Psoas muscle (tissue), 8 donors: ENCODE measurements at regions of chr15 and their contacts with region 1.

Region 1: DNA sequence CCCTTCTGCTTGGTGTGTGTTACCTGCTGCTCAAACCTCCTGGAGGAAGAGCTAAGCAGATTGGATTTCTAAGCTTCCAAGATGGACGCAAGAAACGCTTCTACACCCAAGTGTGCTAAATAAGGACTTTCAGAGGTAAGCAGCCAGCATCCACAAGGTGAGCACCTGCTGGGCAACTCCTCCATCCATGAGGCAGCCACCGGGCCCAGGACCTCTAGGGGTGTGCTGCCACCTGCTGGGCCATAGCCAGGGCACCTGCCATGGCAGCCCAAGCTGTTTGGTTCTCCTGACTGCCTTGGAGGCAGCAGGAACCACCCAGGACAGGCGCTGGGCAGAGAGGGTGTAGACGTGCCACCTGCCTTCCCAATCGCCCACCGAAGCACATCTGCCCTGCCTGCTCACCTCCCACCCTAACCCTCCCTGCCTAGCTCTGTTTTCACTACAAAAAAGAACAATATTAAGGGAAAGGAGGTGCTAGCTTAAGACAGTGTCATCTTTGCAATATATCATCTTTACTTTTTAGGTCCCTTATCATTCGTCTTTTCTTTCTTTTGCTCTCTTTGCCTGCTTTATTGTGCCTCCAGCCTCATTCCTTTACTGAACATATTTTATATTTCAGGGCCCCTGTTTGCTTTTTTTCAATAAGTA is 12.9 kb downstream of the C15orf62 start:
- DNase-seq: peak in 1 of 2 donors; percentile 70
- ATAC-seq: peak; percentile 66 to 79 (median 73)
- H3K4me3 ChIP-seq: no peak overlapping the region
- H3K27ac ChIP-seq: no peak overlapping the region
- H3K4me1 ChIP-seq: peaks cover 10% of the 10 kb centered on the region
- H3K27me3 ChIP-seq: no peaks in the 10 kb centered on the region
- CTCF ChIP-seq: peak; percentile 56

Region 2: DNA sequence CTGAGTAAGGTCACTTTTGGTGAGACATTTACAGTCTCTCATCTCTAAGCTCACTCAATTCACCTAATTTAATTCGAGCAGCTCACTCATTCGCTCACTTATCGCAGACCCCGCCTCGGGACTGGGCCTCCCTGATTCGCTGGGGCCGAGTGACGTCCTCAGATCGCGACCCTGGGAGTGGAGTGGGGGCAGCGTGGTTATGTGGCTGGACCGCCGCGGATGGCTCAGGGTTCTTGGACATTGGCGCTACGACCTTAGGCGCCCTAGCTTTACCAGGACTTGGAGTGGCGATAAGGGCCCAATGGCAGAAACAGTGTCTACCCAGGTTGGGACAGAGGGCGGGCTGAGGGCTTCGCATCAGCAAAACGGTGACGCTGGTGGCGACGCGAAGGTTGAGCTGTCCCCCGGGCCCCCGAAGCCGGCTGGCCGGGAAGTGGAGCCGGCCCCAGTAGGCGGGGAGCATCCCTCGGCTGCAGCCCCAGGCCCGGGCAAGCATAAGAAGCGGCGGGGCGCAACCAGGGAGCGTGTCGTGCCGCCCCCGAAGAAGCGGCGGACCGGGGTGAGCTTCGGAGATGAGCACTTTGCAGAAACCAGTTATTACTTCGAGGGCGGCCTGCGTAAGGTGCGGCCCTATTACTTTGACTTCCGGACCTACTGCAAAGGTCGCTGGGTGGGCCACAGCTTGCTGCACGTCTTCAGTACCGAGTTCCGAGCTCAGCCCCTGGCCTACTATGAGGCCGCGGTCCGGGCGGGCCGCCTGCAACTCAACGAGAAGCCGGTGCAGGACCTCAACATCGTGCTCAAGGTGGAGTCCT is 213.4 kb before region 1 on chr15 and contains the start of gene RPUSD2:
- intact Hi-C with region 1: no loop called
- DNase-seq: peak; percentile 95 to 96
- ATAC-seq: peak; percentile 73 to 85 (median 79)
- H3K4me3 ChIP-seq: peak within 1 kb of the TSS; percentile 98
- H3K27ac ChIP-seq: peak within 1 kb of the TSS; percentile 86
- H3K4me1 ChIP-seq: peaks cover 14% of the 10 kb centered on the region
- H3K27me3 ChIP-seq: no peaks in the 10 kb centered on the region
- CTCF ChIP-seq: no peak
- total RNA-seq, gene RPUSD2: 8.7 to 12.5 (median 11.0) TPM

Region 3: DNA sequence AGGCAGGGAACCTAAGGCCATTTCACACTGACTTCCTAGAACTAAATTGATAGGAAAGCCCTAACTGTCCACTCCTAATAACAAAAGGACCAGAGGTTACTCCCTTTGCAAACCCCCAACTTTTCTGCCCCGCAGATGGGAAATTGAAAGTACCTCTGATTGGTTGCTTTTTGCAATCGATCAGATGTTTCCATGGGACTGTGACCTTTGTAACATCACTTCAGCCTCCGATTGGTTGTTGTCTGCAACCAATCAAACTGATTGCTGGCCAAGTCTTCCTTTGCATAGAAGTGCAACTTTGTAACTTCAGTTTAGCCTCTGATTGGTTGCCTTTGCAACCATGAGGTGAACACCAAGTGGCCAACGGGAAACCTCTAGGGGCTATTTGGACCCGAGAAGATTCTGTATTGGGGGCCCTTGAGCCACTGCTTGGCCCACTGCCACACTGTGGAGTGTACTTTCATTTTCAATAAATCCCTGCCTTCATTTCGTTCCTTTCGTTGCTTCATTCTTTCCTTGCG is 199.9 kb before region 1 on chr15:
- intact Hi-C with region 1: loop called in 1 of 2 experiments (anchors 10 kb)
- DNase-seq: no peak
- ATAC-seq: peak in 3 of 4 donors; percentile 40 to 76 (median 65)
- H3K4me3 ChIP-seq: peak overlapping the region; percentile 56
- H3K27ac ChIP-seq: no peak overlapping the region
- H3K4me1 ChIP-seq: no peaks in the 10 kb centered on the region
- H3K27me3 ChIP-seq: no peaks in the 10 kb centered on the region
- CTCF ChIP-seq: no peak

Region 4: GRCh38 chr15:40702077-40702476 is 80.6 kb before region 1 on chr15:
- intact Hi-C with region 1: no loop called
- DNase-seq: no peak
- ATAC-seq: no peak
- H3K4me3 ChIP-seq: no peak overlapping the region
- H3K27ac ChIP-seq: no peak overlapping the region
- H3K4me1 ChIP-seq: no peaks in the 10 kb centered on the region
- H3K27me3 ChIP-seq: no peaks in the 10 kb centered on the region
- CTCF ChIP-seq: no peak

Region 5: GRCh38 chr15:40716165-40716564 is 66.5 kb before region 1 on chr15:
- intact Hi-C with region 1: no loop called
- DNase-seq: no peak
- ATAC-seq: no peak
- H3K4me3 ChIP-seq: no peak overlapping the region
- H3K27ac ChIP-seq: no peak overlapping the region
- H3K4me1 ChIP-seq: no peaks in the 10 kb centered on the region
- H3K27me3 ChIP-seq: no peaks in the 10 kb centered on the region
- CTCF ChIP-seq: no peak

Region 6: DNA sequence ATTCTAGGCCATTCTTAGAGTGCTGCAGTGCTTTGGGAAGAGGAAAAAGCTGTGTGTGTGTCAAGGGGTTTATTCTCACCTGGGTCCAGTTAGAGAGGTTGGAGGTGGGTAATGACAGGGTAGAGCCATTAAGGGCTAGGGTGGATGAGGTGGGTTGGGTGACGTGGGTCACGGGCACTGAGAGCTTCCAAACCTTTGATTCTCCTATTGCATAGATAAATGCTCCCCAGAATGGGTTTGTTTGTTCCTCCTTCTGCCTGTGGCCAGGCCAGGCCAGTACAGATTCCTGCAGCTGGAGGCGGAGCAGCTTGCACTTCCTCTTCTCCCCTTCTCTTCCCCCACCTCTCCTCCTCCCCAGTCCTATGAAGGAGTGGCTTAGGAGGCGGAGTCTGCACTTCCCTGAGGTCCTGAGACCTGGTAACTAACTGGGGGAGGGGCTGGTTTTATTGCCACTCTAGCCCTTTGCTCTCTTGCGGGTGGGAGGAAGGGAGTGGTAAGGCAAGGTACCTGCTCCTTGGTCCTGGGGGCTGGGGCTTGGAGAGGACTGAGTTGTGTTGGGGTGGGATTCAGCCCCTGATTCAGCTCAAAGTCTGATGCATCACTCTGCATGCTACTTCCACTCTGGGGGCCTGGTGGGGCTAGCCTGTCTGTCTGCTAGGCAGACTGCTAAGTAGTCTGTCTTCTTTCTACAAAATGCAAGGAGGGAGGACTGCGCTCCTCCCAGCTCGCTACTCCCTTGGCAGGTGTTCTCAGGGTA is 64.7 kb after region 1 on chr15:
- intact Hi-C with region 1: loop called (anchors 10 kb)
- DNase-seq: peak in 1 of 2 donors; percentile 30
- ATAC-seq: peak in 1 of 4 donors; percentile 13
- H3K4me3 ChIP-seq: no peak overlapping the region
- H3K27ac ChIP-seq: no peak overlapping the region
- H3K4me1 ChIP-seq: peaks cover 8% of the 10 kb centered on the region
- H3K27me3 ChIP-seq: peaks cover 0 to 46% (median 19%) of the 10 kb centered on the region in 3 donors
- CTCF ChIP-seq: no peak